Esophagus muscularis mucosa (tissue), 4 donors: ENCODE measurements at regions of chr4 and their contacts with region 1.

Region 1: GRCh38 chr4:129641179-129641578 is 545.2 kb downstream of the C4orf33 start:
- DNase-seq: no peak
- H3K4me3 ChIP-seq: no peak overlapping the region
- H3K27ac ChIP-seq: no peak overlapping the region
- H3K4me1 ChIP-seq: no peaks in the 10 kb centered on the region
- H3K27me3 ChIP-seq: no peaks in the 10 kb centered on the region
- CTCF ChIP-seq: peak; percentile 68 to 87 (median 77)
- EP300 ChIP-seq: no peak
- POLR2A ChIP-seq: no peak

Region 2: GRCh38 chr4:129362674-129363274 is 278.4 kb before region 1 on chr4:
- intact Hi-C with region 1: loop called (anchors 2 kb)
- DNase-seq: no peak
- H3K4me3 ChIP-seq: no peak overlapping the region
- H3K27ac ChIP-seq: no peak overlapping the region
- H3K4me1 ChIP-seq: peaks cover 0 to 26% (median 22%) of the 10 kb centered on the region in 4 donors
- H3K27me3 ChIP-seq: no peaks in the 10 kb centered on the region
- CTCF ChIP-seq: peak; percentile 72 to 82 (median 78)
- EP300 ChIP-seq: no peak
- POLR2A ChIP-seq: no peak

Region 3: GRCh38 chr4:129526814-129527213 is 114.4 kb before region 1 on chr4:
- intact Hi-C with region 1: loop called (anchors 5 kb)
- DNase-seq: no peak
- H3K4me3 ChIP-seq: no peak overlapping the region
- H3K27ac ChIP-seq: no peak overlapping the region
- H3K4me1 ChIP-seq: no peaks in the 10 kb centered on the region
- H3K27me3 ChIP-seq: no peaks in the 10 kb centered on the region
- CTCF ChIP-seq: peak; percentile 36 to 45 (median 40)
- EP300 ChIP-seq: no peak
- POLR2A ChIP-seq: no peak

Region 4: GRCh38 chr4:130668859-130669258 is 1027.7 kb after region 1 on chr4:
- intact Hi-C with region 1: no loop called
- DNase-seq: no peak
- H3K4me3 ChIP-seq: no peak overlapping the region
- H3K27ac ChIP-seq: no peak overlapping the region
- H3K4me1 ChIP-seq: no peaks in the 10 kb centered on the region
- H3K27me3 ChIP-seq: no peaks in the 10 kb centered on the region
- CTCF ChIP-seq: no peak
- EP300 ChIP-seq: no peak
- POLR2A ChIP-seq: no peak